HEK293T (cell line): ENCODE measurements at regions of chr3 and their contacts with region 1.

Region 1: DNA sequence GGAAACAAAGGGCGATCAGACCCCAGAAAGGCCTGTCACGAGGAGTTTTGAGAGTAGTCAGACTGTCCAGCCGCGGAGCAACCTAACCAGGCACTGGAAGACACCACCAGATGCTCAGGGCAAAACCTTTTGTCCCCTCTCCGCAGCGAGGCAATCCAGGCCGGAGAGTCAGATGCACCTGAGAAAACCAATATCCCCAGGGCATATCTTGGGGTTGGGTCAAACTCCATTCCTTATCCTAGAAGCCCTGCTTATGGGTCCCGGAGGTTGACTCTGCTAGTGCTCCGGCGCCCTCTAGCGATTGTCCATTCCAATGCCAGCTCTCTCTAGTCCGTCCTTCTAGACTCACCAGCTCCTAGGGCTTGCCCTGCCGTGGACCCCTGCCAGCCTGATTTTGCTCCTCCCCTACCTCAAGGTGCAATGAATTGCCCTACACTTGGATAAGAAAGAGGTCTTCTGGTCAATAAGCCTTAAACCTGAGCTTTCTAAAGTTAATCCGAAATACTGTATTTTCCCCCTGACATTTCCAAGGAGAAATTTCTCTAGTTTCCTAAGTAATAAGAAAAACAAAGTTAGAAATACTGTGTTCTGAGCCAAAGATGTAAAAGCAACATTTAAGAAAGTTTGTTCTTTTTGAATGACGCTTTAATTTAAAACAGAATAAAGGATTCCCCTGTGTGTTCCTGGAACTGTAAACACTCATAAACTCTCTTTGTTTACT is 5.5 kb downstream of the CPNE4 start:
- DNase-seq: peak; percentile 78

Region 2: GRCh38 chr3:131794766-131795388 is 234.5 kb before region 1 on chr3:
- CTCF ChIA-PET with region 1: interaction called, 13 read pairs
- POLR2A ChIA-PET with region 1: no interaction called
- DNase-seq: peak; percentile 60

Region 3: DNA sequence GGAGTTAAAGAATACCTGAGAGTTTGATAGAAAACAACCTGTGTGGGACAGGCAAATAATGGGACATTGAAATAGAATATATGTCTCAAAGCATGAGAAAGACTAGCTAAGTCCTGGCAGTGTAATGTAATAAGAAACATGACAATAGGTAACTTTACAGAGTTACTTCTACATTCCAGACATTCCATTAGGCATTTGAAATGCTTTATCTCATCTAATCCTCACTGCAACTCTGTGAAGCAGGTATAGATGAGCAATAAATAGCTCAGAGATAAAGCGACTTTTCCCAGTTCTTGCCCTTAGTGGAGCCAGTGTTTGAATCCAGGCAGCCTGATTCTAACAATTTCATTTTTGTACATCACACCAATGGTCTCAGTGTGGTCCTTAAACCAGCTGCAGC is 71.4 kb before region 1 on chr3:
- CTCF ChIA-PET with region 1: no interaction called
- POLR2A ChIA-PET with region 1: no interaction called
- DNase-seq: no peak